Right ventricle myocardium inferior (tissue), 1 donor: ENCODE measurements at regions of chr10 and their contacts with region 1.

Region 1: GRCh38 chr10:73879296-73880173 is 5.2 kb upstream of the CAMK2G start:
- DNase-seq: peak; percentile 96
- ATAC-seq: peak; percentile 86

Region 2: GRCh38 chr10:73848821-73849489 is 30.6 kb before region 1 on chr10:
- intact Hi-C with region 1: loop called (anchors 1 kb)
- DNase-seq: peak; percentile 89
- ATAC-seq: peak; percentile 83

Region 3: DNA sequence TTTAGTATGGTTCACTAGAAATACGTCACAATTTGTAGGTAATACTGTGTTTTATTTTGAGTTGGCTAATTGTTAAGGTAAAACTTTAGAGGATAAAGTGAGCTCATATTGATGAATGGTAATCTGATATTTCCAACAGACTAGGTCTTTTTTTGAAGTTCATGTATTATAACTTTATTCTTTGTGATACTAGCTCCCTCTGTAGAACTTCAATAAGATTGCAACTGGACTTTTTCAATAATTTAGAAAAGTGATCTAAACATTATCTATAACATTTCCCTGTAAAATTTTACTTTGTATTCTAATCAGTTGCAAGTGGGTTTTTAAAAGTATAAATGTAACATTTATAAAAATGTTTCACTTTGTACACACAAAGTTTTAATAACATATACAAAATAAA is 355.0 kb after region 1 on chr10:
- intact Hi-C with region 1: loop called (anchors 10 kb)
- DNase-seq: no peak
- ATAC-seq: no peak